ENCODE measurements at regions of chr9 and their contacts with region 1.

Region 1: GRCh38 chr9:22169727-22170503 is 160.8 kb upstream of the CDKN2B start:
- DNase-seq: peak; percentile 78
- ATAC-seq: peak; percentile 88
- H3K4me3 ChIP-seq: peak overlapping the region; percentile 1; the same call in 1 of the 2 replicates
- H3K27ac ChIP-seq: peak overlapping the region; percentile 97
- H3K4me1 ChIP-seq: peaks cover 45% of the 10 kb centered on the region
- H3K27me3 ChIP-seq: no peaks in the 10 kb centered on the region
- CTCF ChIP-seq: no peak

Region 2: GRCh38 chr9:21883642-21884041 is 286.3 kb before region 1 on chr9:
- CTCF ChIA-PET with region 1: no interaction called
- POLR2A ChIA-PET with region 1: no interaction called
- intact Hi-C with region 1: no loop called
- DNase-seq: no peak
- ATAC-seq: no peak
- H3K4me3 ChIP-seq: no peak overlapping the region
- H3K27ac ChIP-seq: no peak overlapping the region
- H3K4me1 ChIP-seq: no peaks in the 10 kb centered on the region
- H3K27me3 ChIP-seq: no peaks in the 10 kb centered on the region
- CTCF ChIP-seq: no peak

Region 3: GRCh38 chr9:22211593-22212360 is 41.9 kb after region 1 on chr9:
- CTCF ChIA-PET with region 1: no interaction called
- POLR2A ChIA-PET with region 1: interaction called, 3 read pairs
- intact Hi-C with region 1: loop called (anchors 2 kb)
- DNase-seq: peak; percentile 96
- ATAC-seq: peak; percentile 76
- H3K4me3 ChIP-seq: 0 out of 2 replicates have a peak overlapping the region, but pooled peaks have one; percentile 2
- H3K27ac ChIP-seq: peak overlapping the region; percentile 99
- H3K4me1 ChIP-seq: peaks cover 80% of the 10 kb centered on the region
- H3K27me3 ChIP-seq: no peaks in the 10 kb centered on the region
- CTCF ChIP-seq: no peak

Region 4: GRCh38 chr9:22452415-22453010 is 282.6 kb after region 1 on chr9:
- CTCF ChIA-PET with region 1: no interaction called
- POLR2A ChIA-PET with region 1: no interaction called
- intact Hi-C with region 1: no loop called
- DNase-seq: peak; percentile 67
- ATAC-seq: no peak
- H3K4me3 ChIP-seq: no peak overlapping the region
- H3K27ac ChIP-seq: no peak overlapping the region
- H3K4me1 ChIP-seq: peaks cover 22% of the 10 kb centered on the region
- H3K27me3 ChIP-seq: no peaks in the 10 kb centered on the region
- CTCF ChIP-seq: peak; percentile 82

Measured in PC-3 (cell line).